Activated CD4-positive, alpha-beta memory T cell treated with anti-CD3 and anti-CD28 coated beads for 36 hours (primary cell): ENCODE measurements at regions of chr11 and their contacts with region 1.

Region 1: GRCh38 chr11:355581-356458 is 13.5 kb upstream of the B4GALNT4 start:
- DNase-seq: peak; percentile 92
- H3K4me3 Mint-ChIP-seq: no peak overlapping the region
- H3K27ac Mint-ChIP-seq: no peak overlapping the region
- H3K4me1 Mint-ChIP-seq: peaks cover 32% of the 10 kb centered on the region
- H3K27me3 Mint-ChIP-seq: no peaks in the 10 kb centered on the region

Region 2: GRCh38 chr11:313787-314547 is 41.9 kb before region 1 on chr11 and contains the start of gene IFITM1:
- CTCF ChIA-PET with region 1: interaction called, 18 read pairs
- POLR2A ChIA-PET with region 1: interaction called, 47 read pairs
- intact Hi-C with region 1: loop called (anchors 1 kb)
- DNase-seq: peak; percentile 80
- H3K4me3 Mint-ChIP-seq: peak within 1 kb of the TSS; percentile 97
- H3K27ac Mint-ChIP-seq: peak within 1 kb of the TSS; percentile 100
- H3K4me1 Mint-ChIP-seq: peaks cover 36% of the 10 kb centered on the region
- H3K27me3 Mint-ChIP-seq: no peaks in the 10 kb centered on the region
- total RNA-seq, gene IFITM1: 195 to 200 TPM

Region 3: DNA sequence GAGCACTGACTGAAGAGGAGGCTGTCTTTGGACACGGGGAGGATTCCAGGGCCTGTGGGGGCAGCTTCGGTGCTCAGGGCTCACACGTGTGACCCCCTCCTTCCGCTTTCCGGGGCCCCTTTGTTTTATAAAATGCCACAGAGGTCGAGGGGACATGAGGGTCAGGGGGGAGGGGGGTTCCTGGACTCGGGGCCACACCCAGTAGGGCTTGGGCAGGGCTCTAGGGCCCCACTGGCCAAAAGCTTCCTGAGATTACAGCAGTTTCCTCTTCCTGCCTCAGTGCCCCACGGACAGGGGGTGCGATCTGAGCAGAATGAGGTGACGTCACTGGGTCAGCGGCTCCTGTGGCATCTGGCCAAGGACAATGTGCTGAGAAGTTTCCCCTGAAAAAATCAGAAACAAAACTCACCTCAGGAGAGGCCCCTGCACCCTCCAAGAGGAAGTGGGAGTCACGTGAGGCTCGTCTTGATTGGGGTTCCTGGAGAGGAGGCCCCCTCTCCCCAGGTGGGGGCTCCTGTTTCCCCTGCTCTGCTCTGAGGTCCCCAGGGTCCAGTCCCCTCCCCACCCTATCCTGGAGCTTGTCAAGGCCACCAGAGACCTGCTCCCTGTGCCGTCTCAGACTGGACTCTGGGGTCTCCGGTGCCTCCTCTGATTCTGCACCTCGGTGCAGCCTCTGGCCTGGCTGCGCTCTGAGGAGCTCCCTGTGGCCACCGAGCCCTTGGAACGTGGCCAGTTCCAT is 28.8 kb before region 1 on chr11:
- CTCF ChIA-PET with region 1: interaction called, 10 read pairs
- POLR2A ChIA-PET with region 1: interaction called, 12 read pairs
- intact Hi-C with region 1: no loop called
- DNase-seq: peak; percentile 89
- H3K4me3 Mint-ChIP-seq: peak overlapping the region; percentile 61
- H3K27ac Mint-ChIP-seq: peak overlapping the region; percentile 93
- H3K4me1 Mint-ChIP-seq: peaks cover 63% of the 10 kb centered on the region
- H3K27me3 Mint-ChIP-seq: no peaks in the 10 kb centered on the region

Region 4: GRCh38 chr11:370087-371055 is 14.6 kb after region 1 on chr11:
- CTCF ChIA-PET with region 1: no interaction called
- POLR2A ChIA-PET with region 1: no interaction called
- intact Hi-C with region 1: no loop called
- DNase-seq: no peak
- H3K4me3 Mint-ChIP-seq: peak overlapping the region; percentile 45
- H3K27ac Mint-ChIP-seq: no peak overlapping the region
- H3K4me1 Mint-ChIP-seq: peaks cover 11% of the 10 kb centered on the region
- H3K27me3 Mint-ChIP-seq: peaks cover 31% of the 10 kb centered on the region